CD8-positive, alpha-beta memory T cell (primary cell): ENCODE measurements at regions of chr17 and their contacts with region 1.

Region 1: GRCh38 chr17:37047631-37048104 is 98.9 kb downstream of the AATF start:
- DNase-seq: peak; percentile 55 to 84 (median 61)
- H3K4me3 ChIP-seq: no peak overlapping the region
- H3K4me3 Mint-ChIP-seq: no peak overlapping the region
- H3K27ac ChIP-seq: no peak overlapping the region
- H3K27ac Mint-ChIP-seq: peak overlapping the region in 7 of 8 donors; percentile 42 to 81 (median 55)
- H3K4me1 ChIP-seq: peaks cover 6% of the 10 kb centered on the region
- H3K4me1 Mint-ChIP-seq: peaks cover 9 to 15% (median 14%) of the 10 kb centered on the region in 3 donors
- H3K27me3 ChIP-seq: no peaks in the 10 kb centered on the region
- H3K27me3 Mint-ChIP-seq: no peaks in the 10 kb centered on the region

Region 2: DNA sequence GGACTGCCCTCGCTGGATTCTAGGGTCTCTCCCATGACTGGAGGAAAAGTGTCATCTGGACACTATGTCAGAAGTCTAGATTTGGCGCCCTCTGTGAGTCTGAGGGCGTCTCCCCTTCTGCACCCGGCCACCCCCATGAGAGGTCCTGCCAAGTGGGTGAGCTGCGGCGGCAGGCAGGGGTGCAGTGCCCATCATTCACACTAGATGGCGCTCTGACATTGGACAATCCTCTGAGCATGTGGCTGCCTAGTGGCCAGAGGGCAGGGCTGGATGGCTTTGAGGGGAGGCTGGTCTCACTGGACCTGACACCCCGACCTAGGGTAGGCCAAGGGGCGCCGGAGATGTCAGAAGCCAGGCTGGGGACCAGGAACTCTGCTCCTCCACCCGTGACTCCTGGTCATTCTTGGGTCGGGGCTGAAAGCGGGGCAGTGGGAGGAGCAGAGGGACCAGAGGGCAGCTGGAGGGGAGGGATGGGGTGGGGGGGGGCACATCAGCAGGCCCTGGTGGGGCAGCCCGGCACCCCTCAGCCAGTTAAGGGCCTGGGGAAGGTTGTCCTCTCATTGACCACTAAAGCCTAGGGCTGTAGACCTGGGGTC is 418.3 kb before region 1 on chr17:
- CTCF ChIA-PET with region 1: interaction called, 50 read pairs
- POLR2A ChIA-PET with region 1: no interaction called
- DNase-seq: peak; percentile 63 to 82 (median 70)
- H3K4me3 ChIP-seq: no peak overlapping the region
- H3K4me3 Mint-ChIP-seq: no peak overlapping the region
- H3K27ac ChIP-seq: no peak overlapping the region
- H3K27ac Mint-ChIP-seq: peak overlapping the region in 1 of 8 donors; percentile 30
- H3K4me1 ChIP-seq: no peaks in the 10 kb centered on the region
- H3K4me1 Mint-ChIP-seq: peaks cover 0 to 1% (median 0%) of the 10 kb centered on the region in 3 donors
- H3K27me3 ChIP-seq: no peaks in the 10 kb centered on the region
- H3K27me3 Mint-ChIP-seq: peaks cover 17 to 22% of the 10 kb centered on the region in 2 donors

Region 3: DNA sequence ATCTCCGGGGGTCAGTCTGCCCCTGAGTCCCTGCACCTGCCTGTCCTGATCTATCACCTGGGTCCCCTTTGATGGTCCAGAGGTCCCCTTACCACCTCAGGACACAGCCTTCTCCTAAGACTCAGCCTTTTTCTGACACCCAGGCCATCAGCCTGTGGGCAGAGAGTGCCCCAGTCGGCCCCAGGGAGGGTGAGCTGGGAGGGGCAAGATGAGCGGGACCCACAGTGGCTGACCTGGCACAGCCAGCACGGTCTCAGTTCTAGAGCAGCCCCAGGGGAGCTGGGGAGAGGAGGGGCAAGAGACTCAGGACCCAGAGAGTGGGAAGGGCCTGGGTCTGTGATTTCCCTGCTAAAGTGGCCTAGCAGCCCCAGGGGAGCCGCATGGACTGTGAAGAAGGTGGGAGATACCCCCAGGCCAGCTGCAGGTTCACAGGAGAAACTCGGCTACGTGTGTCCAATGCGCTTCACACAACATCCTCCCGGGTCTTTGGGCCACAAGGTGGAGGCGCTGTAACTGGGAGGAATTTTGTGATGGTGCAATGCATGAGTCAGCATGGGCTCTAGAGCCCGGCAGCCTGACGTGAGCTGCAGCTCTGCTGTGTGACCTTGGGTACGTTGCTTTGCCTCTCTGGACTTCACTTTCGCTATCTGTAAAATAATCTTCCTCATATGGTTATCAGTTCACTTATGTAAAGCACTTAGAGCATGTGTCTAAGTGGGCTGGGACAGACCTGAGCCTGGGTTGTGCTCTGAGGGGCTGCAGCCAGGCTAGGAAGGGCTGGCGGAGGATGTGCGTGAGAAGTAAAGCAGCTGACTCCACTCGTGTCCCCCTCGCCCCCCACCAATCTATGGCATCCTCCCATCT is 177.6 kb before region 1 on chr17:
- CTCF ChIA-PET with region 1: no interaction called
- POLR2A ChIA-PET with region 1: no interaction called
- DNase-seq: no peak
- H3K4me3 ChIP-seq: no peak overlapping the region
- H3K4me3 Mint-ChIP-seq: no peak overlapping the region
- H3K27ac ChIP-seq: no peak overlapping the region
- H3K27ac Mint-ChIP-seq: no peak overlapping the region
- H3K4me1 ChIP-seq: no peaks in the 10 kb centered on the region
- H3K4me1 Mint-ChIP-seq: no peaks in the 10 kb centered on the region
- H3K27me3 ChIP-seq: no peaks in the 10 kb centered on the region
- H3K27me3 Mint-ChIP-seq: peaks cover 4 to 19% of the 10 kb centered on the region in 2 donors

Region 4: GRCh38 chr17:37060094-37060493 is 12.4 kb after region 1 on chr17:
- CTCF ChIA-PET with region 1: interaction called, 11 read pairs
- POLR2A ChIA-PET with region 1: no interaction called
- DNase-seq: no peak
- H3K4me3 ChIP-seq: no peak overlapping the region
- H3K4me3 Mint-ChIP-seq: no peak overlapping the region
- H3K27ac ChIP-seq: no peak overlapping the region
- H3K27ac Mint-ChIP-seq: peak overlapping the region in 2 of 8 donors; percentile 19 to 57
- H3K4me1 ChIP-seq: no peaks in the 10 kb centered on the region
- H3K4me1 Mint-ChIP-seq: no peaks in the 10 kb centered on the region
- H3K27me3 ChIP-seq: no peaks in the 10 kb centered on the region
- H3K27me3 Mint-ChIP-seq: no peaks in the 10 kb centered on the region

Region 5: GRCh38 chr17:37067555-37068111 is 20.0 kb after region 1 on chr17:
- CTCF ChIA-PET with region 1: interaction called, 10 read pairs
- POLR2A ChIA-PET with region 1: no interaction called
- DNase-seq: no peak
- H3K4me3 ChIP-seq: no peak overlapping the region
- H3K4me3 Mint-ChIP-seq: no peak overlapping the region
- H3K27ac ChIP-seq: no peak overlapping the region
- H3K27ac Mint-ChIP-seq: peak overlapping the region in 2 of 8 donors; percentile 15 to 40
- H3K4me1 ChIP-seq: no peaks in the 10 kb centered on the region
- H3K4me1 Mint-ChIP-seq: no peaks in the 10 kb centered on the region
- H3K27me3 ChIP-seq: no peaks in the 10 kb centered on the region
- H3K27me3 Mint-ChIP-seq: peaks cover 3% of the 10 kb centered on the region in 2 donors

Region 6: GRCh38 chr17:37089956-37090355 is 42.3 kb after region 1 on chr17:
- CTCF ChIA-PET with region 1: interaction called, 15 read pairs
- POLR2A ChIA-PET with region 1: interaction called, 3 read pairs
- DNase-seq: peak; percentile 31 to 86 (median 44)
- H3K4me3 ChIP-seq: peak overlapping the region; percentile 20
- H3K4me3 Mint-ChIP-seq: peak overlapping the region; percentile 0 to 69 (median 44)
- H3K27ac ChIP-seq: peak overlapping the region; percentile 77
- H3K27ac Mint-ChIP-seq: peak overlapping the region; percentile 86 to 100 (median 98)
- H3K4me1 ChIP-seq: peaks cover 36% of the 10 kb centered on the region
- H3K4me1 Mint-ChIP-seq: peaks cover 47 to 65% (median 51%) of the 10 kb centered on the region in 3 donors
- H3K27me3 ChIP-seq: no peaks in the 10 kb centered on the region
- H3K27me3 Mint-ChIP-seq: no peaks in the 10 kb centered on the region

Region 7: DNA sequence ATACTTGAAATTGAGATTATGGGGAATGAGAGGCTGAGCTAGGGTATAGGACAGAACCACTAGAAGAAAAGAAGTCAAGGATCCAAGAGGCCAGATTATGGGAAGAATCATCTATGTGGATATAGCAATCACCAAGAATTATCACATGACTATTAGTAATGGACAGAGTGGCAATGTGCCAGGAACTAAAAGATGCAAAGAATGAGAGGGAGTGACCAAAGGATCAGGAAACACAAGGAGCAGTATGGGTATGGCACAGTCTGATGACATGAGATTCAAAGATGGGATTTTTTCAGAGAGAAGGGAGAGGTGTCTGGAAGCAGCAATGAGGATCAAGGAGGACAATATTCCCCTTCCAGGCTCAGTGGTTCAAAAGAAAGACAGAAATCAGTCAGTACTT is 113.3 kb after region 1 on chr17:
- CTCF ChIA-PET with region 1: no interaction called
- POLR2A ChIA-PET with region 1: no interaction called
- DNase-seq: no peak
- H3K4me3 ChIP-seq: no peak overlapping the region
- H3K4me3 Mint-ChIP-seq: no peak overlapping the region
- H3K27ac ChIP-seq: no peak overlapping the region
- H3K27ac Mint-ChIP-seq: peak overlapping the region in 2 of 8 donors; percentile 20 to 58
- H3K4me1 ChIP-seq: no peaks in the 10 kb centered on the region
- H3K4me1 Mint-ChIP-seq: no peaks in the 10 kb centered on the region
- H3K27me3 ChIP-seq: no peaks in the 10 kb centered on the region
- H3K27me3 Mint-ChIP-seq: peaks cover 0 to 1% of the 10 kb centered on the region in 2 donors